HCT116 (cell line): ENCODE measurements at regions of chr14 and their contacts with region 1.

Region 1: GRCh38 chr14:95515596-95516552 is 576 bp downstream of the SYNE3 start:
- DNase-seq: no peak
- ATAC-seq: peak; percentile 90
- H3K4me3 ChIP-seq: peak overlapping the region; percentile 50 to 61
- H3K27ac ChIP-seq: no peak overlapping the region
- H3K4me1 ChIP-seq: peaks cover 22 to 44% of the 10 kb centered on the region in 2 experiments
- H3K27me3 ChIP-seq: no peaks in the 10 kb centered on the region
- CTCF ChIP-seq: peak in 2 of 3 experiments; percentile 43 to 46; a peak in 4 of 6 replicates
- POLR2A ChIP-seq: no peak
- RAD21 ChIP-seq: no peak

Region 2: GRCh38 chr14:95265106-95266094 is 250.5 kb before region 1 on chr14:
- CTCF ChIA-PET with region 1: no interaction called
- POLR2A ChIA-PET with region 1: no interaction called
- RAD21 ChIA-PET with region 1: no interaction called
- intact Hi-C with region 1: loop called (anchors 5 kb)
- DNase-seq: peak; percentile 98
- ATAC-seq: peak; percentile 96
- H3K4me3 ChIP-seq: peak overlapping the region; percentile 20 to 37
- H3K27ac ChIP-seq: peak overlapping the region; percentile 80
- H3K4me1 ChIP-seq: peaks cover 23 to 53% of the 10 kb centered on the region in 2 experiments
- H3K27me3 ChIP-seq: no peaks in the 10 kb centered on the region
- CTCF ChIP-seq: no peak
- POLR2A ChIP-seq: no peak
- RAD21 ChIP-seq: peak; percentile 56

Region 3: GRCh38 chr14:95327558-95328374 is 188.1 kb before region 1 on chr14:
- CTCF ChIA-PET with region 1: no interaction called
- POLR2A ChIA-PET with region 1: no interaction called
- RAD21 ChIA-PET with region 1: no interaction called
- intact Hi-C with region 1: no loop called
- DNase-seq: no peak
- ATAC-seq: no peak
- H3K4me3 ChIP-seq: no peak overlapping the region
- H3K27ac ChIP-seq: no peak overlapping the region
- H3K4me1 ChIP-seq: no peaks in the 10 kb centered on the region
- H3K27me3 ChIP-seq: no peaks in the 10 kb centered on the region
- CTCF ChIP-seq: no peak
- POLR2A ChIP-seq: no peak
- RAD21 ChIP-seq: no peak